Activated CD8-positive, alpha-beta T cell treated with anti-CD3 and anti-CD28 coated beads, Interleukin-2, amount 10 ng/mL, durations not matched to agents 7 days and 5 days (primary cell): ENCODE measurements at regions of chr16 and their contacts with region 1.

Region 1: DNA sequence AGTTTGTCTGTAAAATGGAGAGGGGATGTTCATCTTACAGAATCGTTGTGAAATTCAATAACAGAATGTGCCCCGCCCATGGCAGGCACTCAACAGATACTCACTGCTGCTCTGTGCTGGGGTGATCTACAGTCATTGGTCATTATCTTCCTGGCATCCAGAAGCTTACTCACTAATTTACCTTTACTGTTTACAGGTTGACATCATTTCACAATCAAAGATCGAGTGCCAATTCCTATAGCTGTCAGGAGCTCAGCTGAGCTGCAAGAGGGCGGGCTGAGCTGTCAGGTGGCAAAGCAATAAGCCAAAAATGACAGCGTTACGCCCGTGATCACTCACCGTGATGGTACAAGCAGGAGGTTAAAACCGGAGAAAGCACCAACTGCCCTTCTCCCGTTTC is 51.2 kb downstream of the LITAF start:
- DNase-seq: no peak
- ATAC-seq: no peak
- H3K4me3 Mint-ChIP-seq: no peak overlapping the region
- H3K27ac Mint-ChIP-seq: no peak overlapping the region
- H3K4me1 Mint-ChIP-seq: peaks cover 1% of the 10 kb centered on the region
- H3K27me3 Mint-ChIP-seq: peaks cover 2% of the 10 kb centered on the region

Region 2: GRCh38 chr16:10964039-10964890 is 571.2 kb before region 1 on chr16:
- CTCF ChIA-PET with region 1: interaction called, 14 read pairs
- POLR2A ChIA-PET with region 1: no interaction called
- DNase-seq: peak; percentile 86
- ATAC-seq: peak; percentile 70
- H3K4me3 Mint-ChIP-seq: peak overlapping the region; percentile 42
- H3K27ac Mint-ChIP-seq: peak overlapping the region; percentile 83
- H3K4me1 Mint-ChIP-seq: peaks cover 69% of the 10 kb centered on the region
- H3K27me3 Mint-ChIP-seq: no peaks in the 10 kb centered on the region

Region 3: DNA sequence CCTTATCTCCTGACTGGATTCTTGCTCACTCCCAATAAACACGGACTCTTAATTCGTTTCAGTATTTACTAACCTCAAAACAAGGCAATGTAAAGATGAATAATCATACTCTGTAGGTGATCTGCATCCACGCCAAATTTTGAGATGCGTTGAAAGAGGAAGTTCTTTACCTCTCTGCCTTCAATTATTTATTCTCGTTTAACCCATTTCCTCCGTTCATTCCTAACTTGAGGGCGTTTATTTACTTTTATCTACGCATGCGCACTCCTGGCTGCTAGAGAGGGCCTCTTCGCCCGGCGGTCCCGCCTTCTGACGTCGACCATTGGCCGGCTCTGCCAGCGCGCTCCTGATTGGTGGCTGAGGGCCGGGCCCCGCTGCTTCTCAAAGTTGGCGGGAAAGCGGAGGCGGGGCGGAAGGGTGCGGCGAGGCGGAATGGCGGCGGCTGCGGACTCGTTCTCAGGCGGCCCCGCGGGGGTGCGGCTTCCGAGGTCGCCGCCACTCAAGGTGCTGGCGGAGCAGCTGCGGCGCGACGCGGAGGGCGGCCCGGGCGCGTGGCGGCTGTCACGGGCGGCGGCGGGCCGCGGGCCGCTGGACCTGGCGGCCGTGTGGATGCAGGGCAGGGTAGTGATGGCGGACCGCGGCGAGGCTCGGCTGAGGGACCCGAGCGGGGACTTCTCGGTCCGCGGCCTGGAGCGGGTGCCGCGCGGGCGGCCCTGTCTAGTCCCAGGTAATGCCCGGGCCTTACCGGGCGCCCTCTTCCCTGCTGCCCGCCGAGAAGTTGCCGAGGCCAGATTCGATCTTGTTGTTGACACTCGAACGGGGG is 190.2 kb before region 1 on chr16 and contains the start of gene RMI2:
- CTCF ChIA-PET with region 1: no interaction called
- POLR2A ChIA-PET with region 1: no interaction called
- DNase-seq: peak; percentile 99
- ATAC-seq: peak; percentile 100
- H3K4me3 Mint-ChIP-seq: peak within 1 kb of the TSS; percentile 94
- H3K27ac Mint-ChIP-seq: peak within 1 kb of the TSS; percentile 86
- H3K4me1 Mint-ChIP-seq: peaks cover 68% of the 10 kb centered on the region
- H3K27me3 Mint-ChIP-seq: no peaks in the 10 kb centered on the region
- total RNA-seq, gene RMI2: 65.6 to 67.0 TPM

Region 4: GRCh38 chr16:11524098-11524750 is 11.2 kb before region 1 on chr16:
- CTCF ChIA-PET with region 1: interaction called, 16 read pairs
- POLR2A ChIA-PET with region 1: no interaction called
- DNase-seq: no peak
- ATAC-seq: no peak
- H3K4me3 Mint-ChIP-seq: no peak overlapping the region
- H3K27ac Mint-ChIP-seq: no peak overlapping the region
- H3K4me1 Mint-ChIP-seq: peaks cover 4% of the 10 kb centered on the region
- H3K27me3 Mint-ChIP-seq: no peaks in the 10 kb centered on the region

Region 5: DNA sequence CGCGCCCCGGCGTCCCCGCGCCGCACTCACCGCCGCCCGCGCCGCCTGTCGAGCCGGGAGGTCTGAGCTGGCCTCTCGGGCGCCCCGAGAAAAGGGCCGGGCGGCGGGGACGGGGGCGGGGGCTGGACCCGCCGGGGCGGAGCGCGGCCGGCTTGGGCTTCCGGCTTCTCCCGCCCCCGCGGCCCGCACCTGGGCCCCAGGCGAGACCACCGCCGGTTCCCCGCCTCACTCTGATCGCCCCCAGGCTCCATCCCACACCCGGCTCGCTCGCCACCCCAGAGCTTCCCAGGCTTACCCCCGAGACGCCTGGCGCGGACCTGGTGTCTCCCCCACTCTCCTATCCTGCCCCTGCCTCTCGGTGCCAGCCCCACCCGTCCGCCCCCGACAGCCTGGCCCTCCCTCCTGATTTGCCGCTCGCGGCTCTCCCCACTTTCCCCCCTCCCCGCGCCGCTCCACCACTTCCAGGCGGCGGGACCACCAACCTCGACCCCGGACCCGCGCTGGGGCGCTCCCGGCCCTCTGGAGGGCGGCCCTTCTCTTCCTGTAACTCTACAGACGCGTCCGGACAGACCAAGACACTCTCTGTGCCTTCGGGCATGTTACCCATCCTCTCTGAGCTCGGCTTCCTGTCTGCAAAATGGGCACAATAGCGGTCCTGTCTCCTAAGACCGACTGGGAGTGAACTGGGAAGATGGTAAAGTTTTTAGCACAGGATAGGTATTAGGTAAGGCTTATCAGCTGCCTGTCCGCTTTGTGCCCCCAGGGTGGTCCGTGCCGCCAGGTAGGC is 51.6 kb after region 1 on chr16 and contains the start of gene LITAF:
- CTCF ChIA-PET with region 1: interaction called, 48 read pairs
- POLR2A ChIA-PET with region 1: interaction called, 3 read pairs
- DNase-seq: peak; percentile 65
- ATAC-seq: peak; percentile 68
- H3K4me3 Mint-ChIP-seq: peak within 1 kb of the TSS; percentile 90
- H3K27ac Mint-ChIP-seq: peak within 1 kb of the TSS; percentile 93
- H3K4me1 Mint-ChIP-seq: peaks cover 40% of the 10 kb centered on the region
- H3K27me3 Mint-ChIP-seq: peaks cover 8% of the 10 kb centered on the region
- total RNA-seq, gene LITAF: 79.4 to 80.5 TPM

Region 6: DNA sequence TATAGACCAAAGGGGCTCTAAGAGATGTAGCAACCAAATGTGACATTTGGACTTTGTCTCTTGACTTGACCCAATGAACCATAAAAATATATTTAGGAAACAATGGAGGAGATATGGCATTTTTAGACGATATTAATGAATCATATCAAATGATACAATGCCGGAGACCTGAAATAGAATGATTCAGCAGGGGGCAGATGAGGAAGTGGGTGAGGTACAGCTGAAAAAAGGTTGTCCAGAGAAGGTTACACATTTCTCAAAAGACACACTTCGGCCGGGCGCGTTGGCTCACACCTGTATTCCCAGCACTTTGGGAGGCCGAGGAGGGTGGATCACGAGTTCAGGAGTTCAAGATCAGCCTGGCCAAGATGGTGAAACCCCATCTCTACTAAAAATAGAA is 116.3 kb after region 1 on chr16:
- CTCF ChIA-PET with region 1: interaction called, 16 read pairs
- POLR2A ChIA-PET with region 1: no interaction called
- DNase-seq: no peak
- ATAC-seq: no peak
- H3K4me3 Mint-ChIP-seq: no peak overlapping the region
- H3K27ac Mint-ChIP-seq: no peak overlapping the region
- H3K4me1 Mint-ChIP-seq: peaks cover 18% of the 10 kb centered on the region
- H3K27me3 Mint-ChIP-seq: peaks cover 12% of the 10 kb centered on the region

Region 7: DNA sequence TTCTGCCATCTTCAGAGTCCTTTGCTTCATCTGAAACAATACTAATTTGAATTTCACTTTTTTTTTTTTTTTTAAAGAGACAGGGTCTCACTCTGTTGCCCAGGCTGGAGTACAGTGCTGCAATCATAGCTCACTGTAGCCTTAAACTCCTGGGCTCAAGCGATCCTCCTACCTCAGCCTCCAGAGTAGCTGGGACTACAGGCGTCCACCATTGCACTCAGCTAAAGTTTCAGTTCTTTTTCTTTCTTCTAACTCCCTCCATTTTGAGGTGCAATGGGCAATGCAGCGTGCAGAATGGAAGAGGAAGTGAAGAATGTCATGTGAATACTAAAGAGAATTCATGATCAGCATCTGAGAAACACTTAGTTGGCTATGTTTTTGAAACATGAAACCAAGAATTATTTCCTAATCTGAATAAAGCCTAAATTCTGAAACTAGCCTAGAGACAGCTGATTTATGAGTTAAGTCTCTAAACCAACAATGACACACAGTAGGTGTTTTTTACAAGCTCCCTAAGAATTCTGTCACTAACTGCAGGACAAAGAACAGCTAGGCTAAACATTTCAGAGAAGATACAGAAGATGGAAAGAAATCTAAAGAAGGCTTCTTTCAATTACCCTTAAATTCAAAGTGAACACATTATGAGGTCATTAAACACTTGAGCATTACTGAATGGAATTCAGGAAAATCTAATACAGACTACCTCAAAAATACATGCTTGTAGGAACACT is 153.7 kb after region 1 on chr16:
- CTCF ChIA-PET with region 1: interaction called, 16 read pairs
- POLR2A ChIA-PET with region 1: no interaction called
- DNase-seq: no peak
- ATAC-seq: no peak
- H3K4me3 Mint-ChIP-seq: no peak overlapping the region
- H3K27ac Mint-ChIP-seq: no peak overlapping the region
- H3K4me1 Mint-ChIP-seq: peaks cover 11% of the 10 kb centered on the region
- H3K27me3 Mint-ChIP-seq: no peaks in the 10 kb centered on the region